PC-3 (cell line): ENCODE measurements at regions of chr6 and their contacts with region 1.

Region 1: DNA sequence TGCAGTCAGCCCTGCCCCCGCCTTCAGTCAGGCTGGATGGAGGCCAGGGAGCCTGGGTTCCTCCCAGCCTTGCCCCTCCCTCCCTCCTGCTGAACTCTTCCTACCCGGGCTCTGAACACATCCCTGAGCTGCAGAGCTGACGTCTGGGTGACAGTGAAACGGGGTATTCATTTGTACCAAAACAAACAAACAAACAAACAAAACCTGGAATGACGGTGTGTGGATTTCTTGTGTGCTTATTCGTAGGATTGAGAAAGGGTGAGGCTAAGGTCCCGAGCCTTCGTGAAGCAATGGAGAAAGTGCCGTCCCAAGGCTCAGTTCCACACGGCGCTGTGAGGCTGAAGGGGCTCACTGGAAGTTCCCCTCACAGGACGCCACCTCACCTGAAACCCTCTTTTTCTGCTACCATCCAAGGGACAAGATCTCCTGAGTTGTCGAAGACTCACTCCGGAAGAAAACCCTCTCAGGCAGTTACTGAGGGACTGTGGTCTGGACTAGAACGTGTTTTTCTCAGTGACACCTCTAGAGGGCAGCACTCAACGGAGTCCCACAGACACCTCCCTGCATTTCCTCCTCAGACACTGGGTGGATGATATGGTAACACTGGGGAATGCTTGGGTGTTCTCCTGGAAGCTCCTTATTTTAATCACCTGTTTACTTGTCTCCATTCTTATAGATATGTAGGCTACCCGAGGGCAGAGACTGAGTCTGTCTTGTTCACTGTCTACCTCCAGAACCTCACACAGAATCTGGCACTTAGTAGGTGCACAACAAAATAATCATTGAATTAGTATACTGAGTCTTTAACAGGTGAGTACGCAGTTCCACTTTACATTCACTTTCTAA is 27.3 kb downstream of the GSTA3 start:
- DNase-seq: peak; percentile 84
- ATAC-seq: peak; percentile 98
- H3K4me3 ChIP-seq: peak overlapping the region; percentile 69
- H3K27ac ChIP-seq: no peak overlapping the region
- H3K4me1 ChIP-seq: peaks cover 11% of the 10 kb centered on the region
- H3K27me3 ChIP-seq: no peaks in the 10 kb centered on the region
- CTCF ChIP-seq: peak; percentile 85

Region 2: GRCh38 chr6:52243282-52243893 is 638.8 kb before region 1 on chr6:
- CTCF ChIA-PET with region 1: no interaction called
- POLR2A ChIA-PET with region 1: no interaction called
- intact Hi-C with region 1: no loop called
- DNase-seq: peak; percentile 13
- ATAC-seq: no peak
- H3K4me3 ChIP-seq: no peak overlapping the region
- H3K27ac ChIP-seq: no peak overlapping the region
- H3K4me1 ChIP-seq: no peaks in the 10 kb centered on the region
- H3K27me3 ChIP-seq: peaks cover 48% of the 10 kb centered on the region
- CTCF ChIP-seq: no peak

Region 3: GRCh38 chr6:52724406-52725121 is 157.7 kb before region 1 on chr6:
- CTCF ChIA-PET with region 1: no interaction called
- POLR2A ChIA-PET with region 1: no interaction called
- intact Hi-C with region 1: loop called (anchors 10 kb)
- DNase-seq: peak; percentile 80
- ATAC-seq: peak; percentile 35; the same call in 1 of the 2 replicates
- H3K4me3 ChIP-seq: peak overlapping the region; percentile 31
- H3K27ac ChIP-seq: peak overlapping the region; percentile 94
- H3K4me1 ChIP-seq: peaks cover 48% of the 10 kb centered on the region
- H3K27me3 ChIP-seq: no peaks in the 10 kb centered on the region
- CTCF ChIP-seq: peak; percentile 86

Region 4: DNA sequence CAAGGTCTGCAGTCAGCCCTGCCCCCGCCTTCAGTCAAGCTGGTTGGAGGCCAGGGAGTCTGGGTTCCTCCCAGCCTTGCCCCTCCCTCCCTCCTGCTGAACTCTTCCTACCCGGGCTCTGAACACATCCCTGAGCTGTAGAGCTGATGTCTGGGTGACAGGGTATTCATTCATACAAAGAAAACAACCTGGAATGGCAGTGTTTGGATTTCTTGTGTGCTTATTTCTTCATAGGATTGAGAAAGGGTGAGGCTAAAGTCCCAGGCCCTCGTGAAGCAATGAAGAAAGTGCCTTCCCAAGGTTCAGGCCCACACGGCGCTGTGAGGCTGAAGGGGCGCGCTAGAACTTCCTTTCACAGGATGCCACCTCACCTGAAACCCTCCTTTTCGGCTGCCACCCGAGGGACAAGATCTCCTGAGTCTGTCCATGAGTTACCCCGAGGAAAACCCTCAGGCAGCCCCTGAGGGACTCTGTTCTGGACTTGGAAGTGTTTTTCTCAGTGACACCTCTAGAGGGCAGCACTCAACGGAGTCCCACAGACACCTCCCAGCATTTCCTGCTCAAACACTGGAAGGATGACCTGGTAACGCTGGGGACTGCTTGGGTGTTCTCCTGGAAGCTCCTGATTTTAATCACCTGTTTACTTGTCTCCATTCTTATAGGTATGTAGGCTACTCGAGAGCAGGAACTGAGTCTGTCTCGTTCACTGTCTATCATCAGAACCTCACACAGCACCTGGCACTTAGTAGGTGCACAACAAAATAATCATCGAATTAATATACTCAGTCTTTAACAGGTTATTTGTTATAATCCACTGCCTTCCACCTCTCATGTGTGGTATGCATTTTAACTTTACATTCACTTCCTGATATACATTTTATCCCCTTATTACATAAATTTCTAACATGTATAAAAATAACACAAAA is 66.8 kb before region 1 on chr6:
- CTCF ChIA-PET with region 1: interaction called, 6 read pairs
- POLR2A ChIA-PET with region 1: no interaction called
- intact Hi-C with region 1: loop called (anchors 10 kb)
- DNase-seq: peak; percentile 74
- ATAC-seq: peak; percentile 92
- H3K4me3 ChIP-seq: no peak overlapping the region
- H3K27ac ChIP-seq: no peak overlapping the region
- H3K4me1 ChIP-seq: no peaks in the 10 kb centered on the region
- H3K27me3 ChIP-seq: no peaks in the 10 kb centered on the region
- CTCF ChIP-seq: peak; percentile 79

Region 5: GRCh38 chr6:52976591-52977035 is 94.4 kb after region 1 on chr6:
- CTCF ChIA-PET with region 1: no interaction called
- POLR2A ChIA-PET with region 1: no interaction called
- intact Hi-C with region 1: loop called (anchors 5 kb)
- DNase-seq: no peak
- ATAC-seq: no peak
- H3K4me3 ChIP-seq: no peak overlapping the region
- H3K27ac ChIP-seq: no peak overlapping the region
- H3K4me1 ChIP-seq: peaks cover 5% of the 10 kb centered on the region; the same call in 1 of the 2 replicates
- H3K27me3 ChIP-seq: no peaks in the 10 kb centered on the region
- CTCF ChIP-seq: no peak